T-cell (primary cell): ENCODE measurements at regions of chr13 and their contacts with region 1.

Region 1: DNA sequence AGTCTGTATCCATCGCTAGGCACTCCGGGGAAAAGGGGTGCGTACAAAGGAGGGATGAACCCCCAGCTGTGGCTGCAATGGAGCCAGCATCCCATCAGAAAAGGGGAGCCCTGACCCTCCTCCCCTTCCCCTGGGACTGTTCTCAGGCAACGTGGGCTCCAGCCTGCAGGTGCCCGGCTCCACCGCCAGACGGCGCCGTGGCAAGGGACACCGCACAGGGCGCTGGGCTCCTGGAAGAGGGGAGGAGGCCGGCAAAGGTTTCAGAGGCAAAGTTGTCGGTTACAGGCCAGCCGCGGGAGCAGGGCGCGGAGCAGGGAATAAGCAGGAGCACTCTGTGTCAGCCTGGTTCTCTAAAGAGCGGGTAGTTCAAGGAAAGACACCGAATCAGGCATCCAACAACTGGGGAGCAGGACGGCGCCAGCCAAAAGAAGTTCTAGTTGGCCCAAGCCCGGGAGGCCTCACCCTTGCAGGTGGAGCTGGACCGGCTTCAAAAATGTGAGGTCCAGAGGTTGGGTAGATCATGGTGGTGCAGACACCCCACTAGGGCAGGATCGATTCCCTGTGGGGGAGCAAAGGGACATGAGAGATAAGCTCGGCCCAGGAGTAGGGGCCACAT is 53.0 kb upstream of the ATP12A start:
- DNase-seq: no peak
- ATAC-seq: no peak
- H3K4me3 ChIP-seq: no peak overlapping the region
- H3K4me3 Mint-ChIP-seq: no peak overlapping the region
- H3K27ac ChIP-seq: no peak overlapping the region
- H3K27ac Mint-ChIP-seq: peak overlapping the region in 1 of 2 donors; percentile 22
- H3K4me1 ChIP-seq: peaks cover 20 to 55% of the 10 kb centered on the region in 2 experiments
- H3K4me1 Mint-ChIP-seq: peaks cover 19 to 39% (median 39%) of the 10 kb centered on the region in 3 donors
- H3K27me3 ChIP-seq: no peaks in the 10 kb centered on the region
- H3K27me3 Mint-ChIP-seq: no peaks in the 10 kb centered on the region

Region 2: GRCh38 chr13:24638096-24638495 is 10.9 kb after region 1 on chr13:
- CTCF ChIA-PET with region 1: no interaction called
- POLR2A ChIA-PET with region 1: no interaction called
- DNase-seq: no peak
- ATAC-seq: no peak
- H3K4me3 ChIP-seq: no peak overlapping the region
- H3K4me3 Mint-ChIP-seq: no peak overlapping the region
- H3K27ac ChIP-seq: no peak overlapping the region
- H3K27ac Mint-ChIP-seq: no peak overlapping the region
- H3K4me1 ChIP-seq: no peaks in the 10 kb centered on the region
- H3K4me1 Mint-ChIP-seq: no peaks in the 10 kb centered on the region
- H3K27me3 ChIP-seq: peaks cover 0 to 9% of the 10 kb centered on the region in 2 experiments
- H3K27me3 Mint-ChIP-seq: peaks cover 0 to 2% of the 10 kb centered on the region in 2 donors

Region 3: GRCh38 chr13:24700539-24700938 is 73.3 kb after region 1 on chr13:
- CTCF ChIA-PET with region 1: no interaction called
- POLR2A ChIA-PET with region 1: interaction called in 1 of 2 experiments, 10 read pairs
- DNase-seq: no peak
- ATAC-seq: no peak
- H3K4me3 ChIP-seq: no peak overlapping the region
- H3K4me3 Mint-ChIP-seq: no peak overlapping the region
- H3K27ac ChIP-seq: no peak overlapping the region
- H3K27ac Mint-ChIP-seq: no peak overlapping the region
- H3K4me1 ChIP-seq: no peaks in the 10 kb centered on the region
- H3K4me1 Mint-ChIP-seq: no peaks in the 10 kb centered on the region
- H3K27me3 ChIP-seq: peaks cover 0 to 11% of the 10 kb centered on the region in 2 experiments
- H3K27me3 Mint-ChIP-seq: peaks cover 19 to 34% of the 10 kb centered on the region in 2 donors